ENCODE measurements at regions of chr11 and their contacts with region 1.

Region 1: DNA sequence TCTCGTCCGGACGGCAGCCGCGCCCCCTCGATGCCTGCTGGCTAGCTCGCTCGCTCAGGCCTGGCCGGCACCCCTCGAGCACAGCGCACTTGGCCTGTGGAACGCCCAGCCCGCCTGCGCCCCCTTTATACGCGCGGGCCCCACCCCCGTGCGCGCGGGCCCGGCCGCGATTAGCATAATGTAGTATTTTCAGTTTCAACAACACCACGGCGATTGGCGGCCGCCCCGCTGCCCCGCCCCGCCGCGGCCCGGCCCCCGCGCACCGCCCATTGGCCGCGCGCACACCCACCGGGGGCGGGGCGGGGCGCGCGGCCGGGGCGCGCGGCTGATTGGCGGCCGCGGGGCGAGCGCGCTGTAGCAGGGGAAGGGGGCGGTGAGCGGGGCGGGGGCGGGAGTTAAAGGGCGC is at the start of gene CDKN1C:
- ATAC-seq: peak; percentile 61 to 77 (median 63)
- H3K4me3 ChIP-seq: peak within 1 kb of the TSS; percentile 65 to 85 (median 76)
- H3K27ac ChIP-seq: peak within 1 kb of the TSS; percentile 85 to 89
- H3K4me1 ChIP-seq: peaks cover 36 to 41% of the 10 kb centered on the region in 2 donors
- total RNA-seq, gene CDKN1C: 5.0 to 80.1 (median 37.8) TPM

Region 2: DNA sequence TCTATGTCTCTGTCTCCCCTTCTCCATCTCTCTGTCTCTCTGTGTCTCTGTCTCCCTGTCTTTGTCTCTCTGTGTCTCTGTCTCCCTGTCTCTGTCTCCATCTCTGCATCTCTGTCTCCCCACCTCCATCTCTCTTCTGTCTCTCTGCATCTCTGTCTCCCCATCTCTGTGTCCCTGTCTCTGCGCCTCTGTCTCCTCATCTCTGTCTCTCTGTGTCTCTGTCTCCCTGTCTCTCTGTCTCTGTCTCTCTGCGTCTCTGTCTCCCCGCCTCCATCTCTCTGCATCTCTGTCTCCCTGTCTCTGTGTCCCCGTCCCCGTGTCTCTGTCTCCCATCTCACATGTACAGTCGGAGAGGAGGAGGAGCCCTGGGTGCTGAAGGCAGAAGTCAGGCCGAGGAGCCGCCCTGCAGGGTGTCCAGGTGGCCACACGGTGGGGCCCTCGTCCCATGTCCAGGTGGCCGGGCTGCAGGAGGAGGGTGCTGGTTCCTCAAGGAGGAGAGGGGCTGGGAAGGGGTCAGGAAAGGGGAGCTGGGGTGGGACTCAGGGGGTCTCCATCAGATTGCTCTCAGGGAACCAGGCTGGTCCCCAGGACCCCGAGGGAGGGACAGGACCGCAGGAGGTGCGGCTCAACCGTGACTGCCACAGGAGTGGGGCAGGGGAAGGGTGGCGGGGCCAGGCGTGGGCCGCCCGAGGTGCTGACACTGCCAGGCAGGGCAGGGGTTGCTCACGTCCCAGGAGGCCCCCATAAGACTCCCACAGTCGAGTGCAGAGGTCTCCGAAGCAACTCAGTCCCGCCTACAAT is 688.5 kb before region 1 on chr11:
- in situ Hi-C with region 1: loop called in 2 of 9 experiments (anchors 25 kb)
- ATAC-seq: peak; percentile 66 to 88 (median 84)
- H3K4me3 ChIP-seq: no peak overlapping the region
- H3K27ac ChIP-seq: no peak overlapping the region
- H3K4me1 ChIP-seq: peaks cover 0 to 5% of the 10 kb centered on the region in 2 donors

Region 3: GRCh38 chr11:2249189-2249916 is 636.3 kb before region 1 on chr11:
- in situ Hi-C with region 1: loop called in 1 of 9 experiments (anchors 25 kb)
- ATAC-seq: no peak
- H3K4me3 ChIP-seq: no peak overlapping the region
- H3K27ac ChIP-seq: no peak overlapping the region
- H3K4me1 ChIP-seq: no peaks in the 10 kb centered on the region

Region 4: DNA sequence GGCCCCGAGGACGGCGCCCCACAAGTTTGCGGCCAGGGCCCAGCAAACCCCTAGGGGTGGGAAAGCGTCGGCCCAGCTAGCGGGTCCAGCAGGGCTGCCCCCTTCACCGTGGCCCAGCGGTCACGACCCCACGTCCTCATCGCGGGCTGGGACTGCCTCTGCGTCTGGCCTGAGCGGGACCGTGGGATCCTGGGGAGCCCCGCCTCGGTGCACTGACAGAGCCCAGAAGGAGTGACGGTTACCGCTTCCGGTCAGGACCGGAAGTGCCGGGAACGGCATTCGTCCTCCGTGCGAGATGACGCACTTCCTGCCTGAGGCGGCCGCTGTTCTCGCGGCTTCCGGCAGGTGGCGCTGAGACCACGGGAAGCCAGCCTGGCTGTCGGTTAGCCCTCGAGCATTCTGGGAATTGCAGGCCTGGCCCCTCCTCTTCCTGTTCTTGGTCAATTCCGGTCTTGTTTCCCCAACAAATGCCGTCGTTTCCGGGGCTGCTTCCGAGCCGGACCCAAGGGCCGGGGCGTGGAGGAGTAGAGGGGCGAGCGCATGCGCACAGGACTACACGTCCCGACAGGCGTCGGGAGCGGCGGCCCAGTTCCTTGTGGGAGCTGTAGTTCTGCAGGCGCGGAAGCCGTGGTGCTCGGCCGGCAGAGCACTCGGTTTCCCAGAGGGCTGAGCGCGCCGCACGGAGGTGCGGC is 485.5 kb before region 1 on chr11 and contains the start of gene TSSC4:
- in situ Hi-C with region 1: loop called in 2 of 9 experiments (anchors 25 kb)
- ATAC-seq: peak; percentile 83 to 90 (median 88)
- H3K4me3 ChIP-seq: peak within 1 kb of the TSS; percentile 74 to 98 (median 76)
- H3K27ac ChIP-seq: peak within 1 kb of the TSS; percentile 94 to 98
- H3K4me1 ChIP-seq: peaks cover 15 to 16% of the 10 kb centered on the region in 2 donors
- total RNA-seq, gene TSSC4: 34.1 to 51.2 (median 42.6) TPM

Region 5: GRCh38 chr11:2428322-2428795 is 457.3 kb before region 1 on chr11:
- in situ Hi-C with region 1: loop called in 4 of 9 experiments (anchors 10 to 25 kb)
- ATAC-seq: peak; percentile 51 to 99 (median 80)
- H3K4me3 ChIP-seq: no peak overlapping the region
- H3K27ac ChIP-seq: no peak overlapping the region
- H3K4me1 ChIP-seq: no peaks in the 10 kb centered on the region

Region 6: DNA sequence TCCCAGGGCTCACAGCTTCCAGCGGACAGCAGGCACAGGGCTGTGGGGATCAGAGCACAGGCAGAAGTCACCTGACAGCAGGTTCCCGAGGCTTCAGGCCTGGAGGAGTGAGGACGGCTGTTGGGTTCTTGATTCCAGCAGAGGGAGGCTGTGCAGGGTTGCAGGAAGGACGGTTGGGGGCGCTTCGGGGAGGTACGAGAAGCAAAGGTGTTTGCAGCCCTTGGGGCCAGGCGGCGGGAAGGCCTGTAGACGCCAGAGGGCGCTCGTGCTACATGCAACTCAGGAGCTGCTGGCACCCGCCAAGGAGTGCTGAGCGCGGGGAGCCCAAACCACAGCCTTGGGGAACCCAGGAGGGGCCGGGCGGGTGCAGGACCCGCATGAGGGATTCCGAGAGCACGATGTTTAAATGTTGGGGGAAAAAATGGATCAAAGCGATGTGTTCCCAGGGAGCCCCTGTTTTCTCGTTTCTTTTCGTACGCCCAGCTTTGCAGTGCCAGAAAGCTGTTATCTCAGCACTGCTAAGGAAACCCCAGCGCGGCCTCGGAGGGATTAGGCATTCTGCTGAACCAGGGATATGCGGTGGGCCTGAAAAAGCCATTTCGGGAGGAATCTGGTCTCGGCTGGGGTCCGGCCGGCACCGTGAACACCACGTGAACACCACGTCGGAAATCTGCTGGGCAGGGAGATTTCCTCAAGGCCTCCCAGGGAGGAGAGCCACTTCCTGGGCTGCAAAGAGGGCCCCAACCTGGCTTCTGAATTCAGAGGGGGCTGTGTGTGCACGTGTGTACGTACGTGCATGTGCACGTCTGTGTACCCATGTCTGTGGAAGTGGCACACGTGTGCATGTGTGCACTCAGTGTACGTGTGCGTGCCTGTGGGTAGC is 352.7 kb before region 1 on chr11:
- in situ Hi-C with region 1: loop called (anchors 5 to 25 kb)
- ATAC-seq: peak; percentile 73 to 92 (median 78)
- H3K4me3 ChIP-seq: no peak overlapping the region
- H3K27ac ChIP-seq: peak overlapping the region; percentile 28 to 82
- H3K4me1 ChIP-seq: peaks cover 14 to 23% of the 10 kb centered on the region in 2 donors

Region 7: DNA sequence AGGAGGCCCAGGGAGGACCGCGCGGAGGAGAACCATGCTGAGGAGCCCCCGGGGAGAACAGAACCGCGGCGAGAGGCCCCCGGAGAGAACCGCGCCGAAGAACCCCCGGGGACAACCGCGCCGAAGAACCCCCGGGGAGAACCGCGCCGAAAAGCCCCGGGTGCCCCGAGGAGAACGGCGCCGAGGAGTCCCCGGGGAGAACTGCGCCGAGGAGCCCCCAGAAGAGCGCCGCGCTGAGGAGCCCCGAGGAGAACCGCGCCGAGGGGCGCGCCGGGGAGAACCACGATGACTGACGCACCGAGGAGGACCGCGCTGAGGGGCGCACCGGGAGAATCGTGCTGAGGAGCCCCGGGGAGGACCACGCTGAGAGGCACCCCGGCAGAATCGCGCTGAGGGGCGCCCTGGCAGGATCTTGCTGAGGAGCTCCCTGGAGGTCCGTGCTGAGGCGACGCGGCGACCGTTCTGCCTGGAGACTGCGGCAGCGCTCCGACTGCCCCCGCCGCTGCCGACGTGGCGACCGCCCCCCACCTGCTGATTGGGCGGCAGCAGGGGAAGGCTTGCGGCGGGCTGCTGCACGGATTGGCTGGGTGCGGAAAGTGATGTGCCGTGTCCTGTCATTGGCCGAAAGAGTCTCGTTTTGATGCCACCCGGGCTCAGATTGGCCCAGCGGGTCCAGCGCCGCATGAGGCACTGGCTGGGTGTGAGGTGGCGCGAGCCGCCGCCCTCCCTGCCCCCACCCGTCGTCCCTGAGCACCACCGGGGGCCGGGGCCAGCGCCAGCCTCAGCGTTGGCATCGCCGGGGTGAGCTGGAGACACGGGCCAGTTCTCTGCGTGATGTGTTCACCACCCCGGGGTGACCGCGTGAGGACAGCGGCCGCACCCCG is 185.9 kb before region 1 on chr11 and contains the start of gene KCNQ1OT1:
- in situ Hi-C with region 1: loop called in 5 of 9 experiments (anchors 25 kb)
- ATAC-seq: peak; percentile 73 to 96 (median 86)
- H3K4me3 ChIP-seq: peak within 1 kb of the TSS; percentile 45 to 83 (median 56)
- H3K27ac ChIP-seq: peak within 1 kb of the TSS; percentile 95 to 98
- H3K4me1 ChIP-seq: peaks cover 45 to 58% of the 10 kb centered on the region in 2 donors
- total RNA-seq, gene KCNQ1OT1: 1.2 to 6.3 (median 3.8) TPM

Region 8: DNA sequence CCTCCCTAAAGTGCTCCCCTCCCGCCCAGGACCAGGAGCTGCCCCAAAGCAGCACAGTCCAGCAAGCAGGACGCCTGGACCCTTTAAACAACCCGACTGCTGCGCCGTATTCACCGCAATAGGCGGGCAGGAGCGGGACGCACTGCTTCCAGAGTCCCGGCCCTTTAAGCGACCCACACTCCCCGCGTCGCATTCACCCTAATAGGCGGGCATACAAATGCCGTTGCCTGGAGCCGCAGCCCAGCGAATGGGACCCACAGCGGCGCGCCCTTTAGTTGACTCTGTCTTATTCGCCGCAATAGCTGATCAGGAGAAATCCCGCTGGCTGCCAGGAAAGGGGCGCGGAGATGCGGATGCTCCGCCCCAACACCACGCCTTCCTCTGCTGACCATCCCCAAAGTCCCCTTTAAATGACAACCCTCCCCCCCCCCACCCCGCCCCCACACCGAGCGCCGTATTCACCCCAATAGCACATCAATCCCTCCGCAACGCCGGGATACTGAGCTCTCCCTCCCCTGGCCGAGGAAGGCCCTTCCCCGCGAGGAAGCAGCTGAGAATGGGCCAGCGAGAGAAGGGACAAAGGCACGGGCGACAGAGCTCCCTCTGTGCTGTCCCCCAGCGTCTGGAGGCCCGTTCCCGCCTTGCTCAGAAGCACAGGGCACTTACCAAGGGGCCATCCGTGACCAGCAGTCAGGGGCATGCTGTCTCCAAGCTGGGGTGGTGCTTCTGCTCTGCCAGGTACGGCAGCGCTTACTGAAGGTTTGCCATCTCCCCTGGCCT is 274.8 kb after region 1 on chr11:
- in situ Hi-C with region 1: no loop called
- ATAC-seq: peak; percentile 62 to 90 (median 88)
- H3K4me3 ChIP-seq: peak overlapping the region; percentile 38 to 46 (median 42)
- H3K27ac ChIP-seq: peak overlapping the region; percentile 82 to 90
- H3K4me1 ChIP-seq: peaks cover 34 to 45% of the 10 kb centered on the region in 2 donors

Measured in motor neuron (in vitro differentiated cells).